ENCODE measurements at regions of chr12 and their contacts with region 1.

Region 1: DNA sequence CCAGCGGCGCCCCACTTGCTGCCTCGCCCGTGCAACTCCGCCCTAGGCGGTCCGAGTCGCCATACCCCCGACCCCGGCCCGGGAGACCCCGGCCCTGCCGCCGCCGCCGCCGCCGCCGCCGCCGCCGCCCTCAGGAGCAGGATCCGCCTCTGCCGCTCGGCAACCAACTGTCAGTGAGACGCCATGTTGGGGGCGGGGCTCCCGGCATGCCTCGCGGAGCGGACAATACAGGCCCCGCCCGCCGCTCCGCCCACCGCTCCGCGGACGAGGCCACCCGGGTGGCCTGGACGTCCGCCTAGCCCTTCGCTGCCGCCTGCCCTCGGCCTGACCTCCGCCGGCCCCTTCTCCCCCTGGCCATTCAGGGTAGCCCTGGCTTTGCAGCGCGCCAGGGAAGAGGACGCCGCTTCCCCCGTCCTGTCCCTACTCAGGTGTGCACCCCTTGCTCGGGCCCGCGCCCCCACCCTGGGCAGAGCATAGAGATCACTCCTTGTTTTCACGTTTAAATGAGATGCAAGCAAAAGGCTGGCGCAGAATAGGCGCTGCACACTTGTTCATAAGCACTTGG is at the start of gene HECTD4:
- DNase-seq: peak; percentile 99
- ATAC-seq: peak; percentile 99
- H3K4me3 ChIP-seq: peak within 1 kb of the TSS; percentile 85
- H3K27ac ChIP-seq: peak within 1 kb of the TSS; percentile 81
- H3K4me1 ChIP-seq: peaks cover 9% of the 10 kb centered on the region
- H3K27me3 ChIP-seq: no peaks in the 10 kb centered on the region
- CTCF ChIP-seq: no peak
- total RNA-seq, gene HECTD4: 54.7 TPM

Region 2: DNA sequence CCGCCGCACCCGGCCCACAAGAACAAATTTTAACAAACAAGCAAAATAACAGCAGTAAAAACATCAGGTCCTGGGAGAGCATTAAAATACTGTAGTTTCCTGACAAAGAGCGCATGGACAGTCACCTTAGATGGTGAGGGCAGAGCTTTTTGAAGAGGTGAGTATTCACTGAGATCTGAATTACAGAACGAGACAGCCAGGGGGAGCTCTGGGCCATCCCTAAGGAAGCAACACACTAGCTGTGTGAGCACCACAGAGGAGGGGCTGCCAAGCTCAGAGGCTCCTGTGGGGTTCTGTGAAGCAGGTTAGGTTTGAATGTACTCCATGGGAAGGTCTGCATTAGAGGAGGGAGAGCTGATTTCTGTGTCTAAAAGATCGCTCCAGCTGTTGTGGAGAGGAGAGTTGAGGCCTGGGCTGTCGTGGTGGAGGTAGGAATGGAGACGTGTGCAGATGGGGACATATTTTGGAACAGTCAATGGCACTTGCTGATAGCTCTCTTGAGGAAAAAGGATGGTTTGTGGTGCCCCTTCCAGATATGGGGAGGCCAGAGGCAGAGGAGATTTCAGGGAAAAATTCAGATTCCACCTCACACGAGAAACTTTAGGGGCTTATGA is 184.1 kb before region 1 on chr12:
- intact Hi-C with region 1: loop called (anchors 10 kb)
- DNase-seq: no peak
- ATAC-seq: peak; percentile 87
- H3K4me3 ChIP-seq: no peak overlapping the region
- H3K27ac ChIP-seq: no peak overlapping the region
- H3K4me1 ChIP-seq: no peaks in the 10 kb centered on the region
- H3K27me3 ChIP-seq: no peaks in the 10 kb centered on the region
- CTCF ChIP-seq: peak; percentile 49

Measured in upper lobe of right lung (tissue), 1 donor.